ENCODE measurements at regions of chr19 and their contacts with region 1.

Region 1: DNA sequence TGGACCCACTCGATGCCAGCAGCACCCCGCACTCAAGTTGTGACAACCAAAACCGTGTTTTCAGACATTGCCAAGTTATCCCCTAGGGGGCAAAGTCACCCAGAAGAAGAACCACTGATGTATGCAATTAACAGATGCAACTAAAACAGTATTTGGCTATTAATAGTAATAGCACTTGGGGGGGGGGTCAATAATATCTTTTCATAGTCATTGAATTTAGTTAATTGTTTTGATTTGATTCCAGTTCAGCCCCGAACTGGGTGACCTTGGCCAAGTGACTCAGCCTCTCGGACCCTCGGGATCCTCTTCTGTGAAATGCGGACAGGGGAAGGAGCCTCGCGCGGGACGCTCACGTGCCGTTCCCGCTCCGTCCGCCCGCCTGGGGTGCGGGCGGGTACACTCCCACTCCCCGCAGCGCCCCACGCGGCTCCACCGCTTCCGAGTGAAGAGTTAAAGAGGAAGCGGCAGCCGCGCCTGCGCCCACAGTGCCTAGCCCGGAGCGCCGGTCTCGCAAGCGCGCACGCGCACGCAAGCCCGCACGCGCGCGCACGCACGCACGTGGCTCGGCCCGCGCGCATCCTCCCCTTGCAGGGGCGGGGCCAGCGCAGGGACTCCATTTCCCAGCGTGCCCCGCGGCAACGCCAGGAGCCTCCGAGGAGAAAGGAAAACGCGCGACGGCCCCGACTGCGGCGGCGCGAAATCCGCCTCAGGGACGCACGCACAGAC is 449 bp upstream of the DAZAP1 start:
- DNase-seq: peak; percentile 100
- H3K4me3 ChIP-seq: peak overlapping the region; percentile 71
- H3K27ac ChIP-seq: peak overlapping the region; percentile 78
- H3K4me1 ChIP-seq: peaks cover 21% of the 10 kb centered on the region
- CTCF ChIP-seq: peak; percentile 78

Region 2: DNA sequence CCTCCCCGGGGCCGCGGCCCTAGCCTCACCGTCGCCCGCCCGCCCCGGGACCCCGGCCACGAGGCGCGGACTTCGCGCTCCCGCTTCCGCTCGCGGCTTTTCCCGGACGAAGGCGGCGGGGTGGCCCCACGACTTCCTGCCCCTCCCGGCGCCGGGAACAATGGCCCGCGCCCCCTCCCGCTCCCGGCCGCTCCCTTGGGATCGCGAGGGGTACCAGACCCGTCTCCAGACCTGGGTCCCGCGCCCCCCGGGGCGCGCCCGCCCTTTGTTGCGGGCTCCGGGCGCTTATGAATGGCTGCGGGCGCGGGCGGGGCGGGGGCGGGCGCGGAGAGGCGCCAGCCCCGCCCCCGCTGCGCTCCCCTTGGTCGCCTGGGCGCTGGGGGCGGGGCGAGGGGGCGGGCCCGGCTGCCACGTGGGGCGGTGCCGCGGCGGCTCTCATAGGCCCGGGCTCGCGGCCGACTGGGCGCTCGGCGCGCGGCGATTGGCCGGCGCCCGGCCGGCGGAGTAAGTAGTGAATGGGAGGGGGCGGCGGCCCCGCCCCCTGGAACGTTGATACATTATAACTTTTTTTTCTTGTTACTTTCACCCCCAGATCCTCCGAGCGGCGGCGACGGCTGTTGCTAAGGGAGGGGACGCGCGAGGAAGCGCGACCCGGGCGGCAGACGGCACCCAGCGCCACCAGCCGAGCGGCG is 157.5 kb before region 1 on chr19:
- CTCF ChIA-PET with region 1: no interaction called
- POLR2A ChIA-PET with region 1: no interaction called
- intact Hi-C with region 1: no loop called
- DNase-seq: peak; percentile 96
- H3K4me3 ChIP-seq: peak overlapping the region; percentile 97
- H3K27ac ChIP-seq: peak overlapping the region; percentile 87
- H3K4me1 ChIP-seq: peaks cover 46% of the 10 kb centered on the region
- CTCF ChIP-seq: no peak

Region 3: DNA sequence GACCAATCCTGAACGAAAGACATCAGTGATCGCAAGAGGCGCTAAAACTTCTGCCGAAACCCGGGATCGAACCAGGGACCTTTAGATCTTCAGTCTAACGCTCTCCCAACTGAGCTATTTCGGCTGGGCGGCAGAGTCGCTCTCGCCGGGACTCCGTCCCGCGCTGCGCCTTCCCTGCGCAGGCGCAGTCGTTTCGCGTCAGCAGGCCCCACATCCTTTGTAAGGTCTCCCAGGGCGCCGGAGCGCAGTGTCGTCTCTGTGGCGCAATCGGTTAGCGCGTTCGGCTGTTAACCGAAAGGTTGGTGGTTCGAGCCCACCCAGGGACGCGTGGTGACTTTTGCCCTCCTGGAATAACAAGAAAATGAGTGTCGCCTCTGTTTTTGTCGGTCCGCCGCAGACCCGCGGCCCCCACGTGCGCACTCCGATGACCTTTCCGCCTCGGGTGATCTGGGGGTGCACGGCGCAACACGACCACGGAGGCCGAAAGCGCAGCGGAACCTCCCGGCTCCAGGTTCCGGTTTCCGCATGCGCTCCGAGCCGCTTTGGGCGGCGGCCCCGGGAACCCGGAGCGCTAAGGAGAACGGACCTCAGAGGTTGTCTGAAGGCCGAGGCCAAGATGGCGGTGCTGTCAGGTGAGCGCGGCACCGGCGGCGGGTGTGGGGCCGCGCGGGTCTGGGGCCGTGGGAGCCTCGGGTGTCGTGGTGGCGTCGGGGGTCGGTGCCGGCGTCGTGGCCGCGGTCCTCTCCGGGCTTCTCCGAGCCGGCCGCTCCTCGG is 23.4 kb before region 1 on chr19 and contains the start of gene NDUFS7:
- CTCF ChIA-PET with region 1: no interaction called
- POLR2A ChIA-PET with region 1: no interaction called
- intact Hi-C with region 1: loop called (anchors 2 kb)
- DNase-seq: peak; percentile 96
- H3K4me3 ChIP-seq: peak within 1 kb of the TSS; percentile 96
- H3K27ac ChIP-seq: peak within 1 kb of the TSS; percentile 80
- H3K4me1 ChIP-seq: peaks cover 11% of the 10 kb centered on the region
- CTCF ChIP-seq: peak; percentile 63
- total RNA-seq, gene NDUFS7: 125 and 132 TPM in 2 replicates

Region 4: DNA sequence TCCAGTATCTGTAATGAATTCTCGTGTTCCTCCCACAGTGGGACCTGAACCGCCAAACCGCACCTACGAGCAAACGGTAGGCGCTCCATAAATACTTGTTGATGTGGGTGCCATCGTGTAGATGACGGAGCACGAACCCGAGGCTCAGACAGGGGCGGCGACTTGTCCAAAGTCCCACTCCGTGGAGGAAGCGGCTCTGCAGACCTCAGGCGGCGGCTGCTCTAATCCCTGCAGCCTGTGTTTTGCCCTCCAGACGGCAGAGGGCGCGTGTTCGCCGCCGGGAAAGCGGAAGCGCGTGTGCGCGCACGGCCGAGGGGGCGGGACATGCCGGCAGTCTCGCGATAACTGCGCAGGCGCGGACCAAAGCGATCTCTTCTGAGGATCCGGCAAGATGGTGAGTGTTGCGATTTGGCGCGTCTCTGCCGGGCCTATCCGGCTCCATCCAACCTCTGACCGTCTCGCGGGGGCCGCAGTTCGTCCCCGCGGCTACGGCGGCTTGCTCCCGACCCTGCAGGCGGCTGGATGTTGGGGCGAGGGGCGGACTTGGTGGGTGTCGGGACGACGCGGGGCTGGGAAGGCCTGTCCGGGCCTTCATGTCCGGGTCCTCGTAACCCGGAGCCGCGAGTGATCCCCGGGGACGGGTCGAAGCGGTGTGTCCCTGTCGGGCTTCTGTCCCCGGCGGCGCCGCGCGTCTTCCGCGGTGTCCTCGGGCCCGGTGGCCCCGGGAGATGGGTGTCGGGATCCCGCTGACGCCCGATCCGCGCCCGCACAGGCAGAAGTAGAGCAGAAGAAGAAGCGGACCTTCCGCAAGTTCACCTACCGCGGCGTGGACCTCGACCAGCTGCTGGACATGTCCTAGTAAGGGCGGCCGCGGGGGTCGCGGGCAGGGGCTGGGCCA is 31.3 kb after region 1 on chr19 and contains the start of gene RPS15:
- CTCF ChIA-PET with region 1: no interaction called
- POLR2A ChIA-PET with region 1: no interaction called
- intact Hi-C with region 1: loop called (anchors 1 kb)
- DNase-seq: peak; percentile 97
- H3K4me3 ChIP-seq: peak within 1 kb of the TSS; percentile 96
- H3K27ac ChIP-seq: peak within 1 kb of the TSS; percentile 68
- H3K4me1 ChIP-seq: peaks cover 27% of the 10 kb centered on the region
- CTCF ChIP-seq: peak; percentile 85
- total RNA-seq, gene RPS15: 2,068 and 2,241 TPM in 2 replicates

Region 5: GRCh38 chr19:1478934-1479707 is 72.2 kb after region 1 on chr19 and contains the start of gene C19orf25:
- CTCF ChIA-PET with region 1: no interaction called
- POLR2A ChIA-PET with region 1: no interaction called
- intact Hi-C with region 1: loop called (anchors 2 kb)
- DNase-seq: peak; percentile 96
- H3K4me3 ChIP-seq: peak within 1 kb of the TSS; percentile 88
- H3K27ac ChIP-seq: peak within 1 kb of the TSS; percentile 81
- H3K4me1 ChIP-seq: peaks cover 14% of the 10 kb centered on the region
- CTCF ChIP-seq: no peak
- total RNA-seq, gene C19orf25: 27.1 and 45.6 TPM in 2 replicates